ENCODE measurements at regions of chrX and their contacts with region 1.

Region 1: DNA sequence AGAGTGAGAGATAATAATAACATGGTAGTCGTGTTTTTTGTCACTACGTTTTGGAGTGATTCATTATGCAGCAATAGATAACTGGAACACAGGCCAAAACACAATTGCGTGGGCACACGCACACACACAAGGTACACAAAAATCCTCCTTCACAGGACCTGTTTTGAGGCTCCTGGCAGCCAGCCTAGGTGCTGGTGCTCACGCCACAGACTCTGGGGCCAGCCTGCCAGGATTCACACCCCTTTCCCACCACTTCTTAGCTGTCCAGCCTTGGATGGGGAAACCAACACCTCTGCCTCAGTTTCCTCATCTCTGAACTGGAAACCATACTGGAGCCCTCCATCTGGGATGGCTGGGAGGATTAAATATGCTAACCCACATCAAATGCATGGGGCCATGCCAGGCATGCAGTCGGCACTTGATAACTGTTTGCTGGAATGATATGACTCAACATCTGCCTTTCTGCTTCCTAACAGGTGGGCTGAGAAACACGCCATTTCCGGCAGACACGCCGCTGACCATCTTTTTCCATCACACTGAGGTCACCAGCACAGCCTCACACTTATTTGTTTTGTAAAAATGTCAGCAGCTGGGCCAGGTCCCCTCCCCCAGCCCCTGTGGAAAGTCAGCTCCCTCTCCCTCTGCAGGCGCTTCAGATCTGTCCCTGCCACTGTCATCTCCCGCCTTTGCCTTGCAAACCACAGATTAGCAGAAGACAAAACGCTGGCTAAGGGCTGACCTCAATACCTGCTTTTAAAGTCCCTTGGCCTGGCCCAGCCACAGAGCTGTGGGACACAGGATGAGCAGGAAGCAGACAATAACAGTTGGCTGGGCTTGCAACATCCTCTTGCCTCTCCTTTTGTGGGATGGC is 237.5 kb downstream of the BCOR start:
- DNase-seq: peak; percentile 92
- ATAC-seq: peak; percentile 65
- H3K4me3 Mint-ChIP-seq: peak overlapping the region; percentile 39
- H3K27ac Mint-ChIP-seq: peak overlapping the region; percentile 93
- H3K4me1 Mint-ChIP-seq: peaks cover 54% of the 10 kb centered on the region
- H3K27me3 Mint-ChIP-seq: no peaks in the 10 kb centered on the region

Region 2: GRCh38 chrX:39261446-39262147 is 598.6 kb before region 1 on chrX:
- CTCF ChIA-PET with region 1: no interaction called
- POLR2A ChIA-PET with region 1: no interaction called
- intact Hi-C with region 1: loop called in 1 of 2 experiments (anchors 10 kb)
- DNase-seq: peak; percentile 25
- ATAC-seq: peak; percentile 78
- H3K4me3 Mint-ChIP-seq: no peak overlapping the region
- H3K27ac Mint-ChIP-seq: peak overlapping the region; percentile 32
- H3K4me1 Mint-ChIP-seq: peaks cover 52% of the 10 kb centered on the region
- H3K27me3 Mint-ChIP-seq: no peaks in the 10 kb centered on the region

Region 3: GRCh38 chrX:39730662-39731397 is 129.4 kb before region 1 on chrX:
- CTCF ChIA-PET with region 1: interaction called, 5 read pairs
- POLR2A ChIA-PET with region 1: no interaction called
- intact Hi-C with region 1: loop called in 1 of 2 experiments (anchors 5 kb)
- DNase-seq: peak; percentile 76
- ATAC-seq: peak; percentile 92
- H3K4me3 Mint-ChIP-seq: peak overlapping the region; percentile 5
- H3K27ac Mint-ChIP-seq: peak overlapping the region; percentile 71
- H3K4me1 Mint-ChIP-seq: peaks cover 17% of the 10 kb centered on the region
- H3K27me3 Mint-ChIP-seq: no peaks in the 10 kb centered on the region

Region 4: DNA sequence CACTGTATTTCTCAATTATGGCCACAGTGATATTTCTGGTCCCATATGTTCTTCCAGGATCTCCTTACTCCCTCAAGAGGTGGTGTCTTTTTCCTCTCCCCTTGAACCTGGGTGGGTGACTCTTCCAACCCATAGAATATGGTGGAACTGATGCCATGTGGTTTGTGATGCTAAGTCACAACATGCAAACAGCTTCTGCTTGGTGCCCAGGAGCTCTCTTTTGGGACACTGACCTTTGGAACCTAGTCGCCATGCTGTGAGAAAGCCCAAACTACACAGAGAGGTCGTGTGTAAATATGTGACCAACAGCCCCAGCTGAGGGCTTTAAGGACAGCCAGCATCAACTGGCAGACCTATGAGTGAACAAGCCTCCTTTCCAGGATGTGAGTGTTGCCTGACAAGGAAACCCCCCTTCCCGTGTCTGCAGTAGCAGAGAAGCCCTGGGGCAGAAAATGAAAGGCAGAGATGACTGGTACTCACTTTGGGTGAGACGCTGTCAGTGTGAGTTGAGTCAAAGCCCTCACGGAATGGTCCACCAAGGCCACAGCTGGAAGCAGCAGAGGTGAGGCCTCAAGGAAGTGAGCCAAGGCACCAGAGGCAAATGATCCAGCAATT is 14.1 kb after region 1 on chrX:
- CTCF ChIA-PET with region 1: interaction called, 4 read pairs
- POLR2A ChIA-PET with region 1: interaction called, 8 read pairs
- intact Hi-C with region 1: loop called (anchors 1 kb)
- DNase-seq: peak; percentile 84
- ATAC-seq: peak; percentile 80
- H3K4me3 Mint-ChIP-seq: no peak overlapping the region
- H3K27ac Mint-ChIP-seq: peak overlapping the region; percentile 95
- H3K4me1 Mint-ChIP-seq: peaks cover 53% of the 10 kb centered on the region
- H3K27me3 Mint-ChIP-seq: no peaks in the 10 kb centered on the region

Region 5: DNA sequence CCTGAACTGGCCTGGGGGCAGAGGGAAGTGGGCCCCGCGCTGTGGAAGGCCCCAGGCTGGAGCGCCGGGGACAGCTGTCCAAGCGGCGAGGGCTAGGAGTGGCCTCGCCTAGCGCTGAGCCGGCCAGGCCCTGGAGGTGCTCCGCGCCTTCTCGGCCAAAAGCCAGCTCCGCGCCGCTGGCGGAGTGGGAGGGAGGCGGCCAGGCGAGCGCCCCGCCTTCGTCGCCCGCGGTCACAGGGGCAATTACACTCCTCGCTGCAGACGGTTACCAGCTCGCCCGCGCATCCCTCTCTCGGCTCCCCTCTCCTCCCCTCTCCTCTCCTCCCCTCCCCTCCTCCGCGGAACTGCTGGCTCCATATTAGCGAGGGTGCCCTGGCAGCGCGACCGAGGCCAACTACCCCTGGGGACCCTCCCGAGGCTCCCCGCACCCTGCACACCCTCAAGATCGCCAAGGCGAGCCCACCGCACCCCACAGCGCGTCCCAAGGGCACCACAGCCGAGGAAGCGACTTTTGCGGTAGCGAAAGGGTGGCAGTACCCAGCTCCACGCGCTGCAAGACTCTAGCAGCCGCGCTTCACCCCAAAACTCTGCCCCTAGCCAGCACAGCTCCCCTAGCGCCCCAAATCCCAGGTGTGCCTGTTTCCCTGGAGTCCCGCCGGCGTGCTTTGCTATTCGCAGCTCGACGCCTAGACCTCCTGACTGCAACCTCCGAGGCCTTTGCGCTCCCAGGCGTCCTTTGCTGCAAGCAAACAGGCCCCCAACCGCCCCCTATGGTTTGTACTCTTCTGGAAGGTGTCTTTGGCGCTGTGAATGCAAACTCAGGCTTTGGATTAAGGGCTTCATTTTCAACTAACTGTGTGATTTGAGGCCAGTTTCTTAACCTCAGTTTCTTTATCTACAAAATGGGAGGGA is 146.1 kb after region 1 on chrX:
- CTCF ChIA-PET with region 1: no interaction called
- POLR2A ChIA-PET with region 1: no interaction called
- intact Hi-C with region 1: loop called (anchors 5 kb)
- DNase-seq: peak; percentile 65
- ATAC-seq: peak; percentile 60
- H3K4me3 Mint-ChIP-seq: no peak overlapping the region
- H3K27ac Mint-ChIP-seq: no peak overlapping the region
- H3K4me1 Mint-ChIP-seq: peaks cover 25% of the 10 kb centered on the region
- H3K27me3 Mint-ChIP-seq: peaks cover 32% of the 10 kb centered on the region

Region 6: GRCh38 chrX:40031911-40032310 is 171.7 kb after region 1 on chrX:
- CTCF ChIA-PET with region 1: no interaction called
- POLR2A ChIA-PET with region 1: no interaction called
- intact Hi-C with region 1: no loop called
- DNase-seq: no peak
- ATAC-seq: no peak
- H3K4me3 Mint-ChIP-seq: no peak overlapping the region
- H3K27ac Mint-ChIP-seq: no peak overlapping the region
- H3K4me1 Mint-ChIP-seq: no peaks in the 10 kb centered on the region
- H3K27me3 Mint-ChIP-seq: no peaks in the 10 kb centered on the region

Region 7: DNA sequence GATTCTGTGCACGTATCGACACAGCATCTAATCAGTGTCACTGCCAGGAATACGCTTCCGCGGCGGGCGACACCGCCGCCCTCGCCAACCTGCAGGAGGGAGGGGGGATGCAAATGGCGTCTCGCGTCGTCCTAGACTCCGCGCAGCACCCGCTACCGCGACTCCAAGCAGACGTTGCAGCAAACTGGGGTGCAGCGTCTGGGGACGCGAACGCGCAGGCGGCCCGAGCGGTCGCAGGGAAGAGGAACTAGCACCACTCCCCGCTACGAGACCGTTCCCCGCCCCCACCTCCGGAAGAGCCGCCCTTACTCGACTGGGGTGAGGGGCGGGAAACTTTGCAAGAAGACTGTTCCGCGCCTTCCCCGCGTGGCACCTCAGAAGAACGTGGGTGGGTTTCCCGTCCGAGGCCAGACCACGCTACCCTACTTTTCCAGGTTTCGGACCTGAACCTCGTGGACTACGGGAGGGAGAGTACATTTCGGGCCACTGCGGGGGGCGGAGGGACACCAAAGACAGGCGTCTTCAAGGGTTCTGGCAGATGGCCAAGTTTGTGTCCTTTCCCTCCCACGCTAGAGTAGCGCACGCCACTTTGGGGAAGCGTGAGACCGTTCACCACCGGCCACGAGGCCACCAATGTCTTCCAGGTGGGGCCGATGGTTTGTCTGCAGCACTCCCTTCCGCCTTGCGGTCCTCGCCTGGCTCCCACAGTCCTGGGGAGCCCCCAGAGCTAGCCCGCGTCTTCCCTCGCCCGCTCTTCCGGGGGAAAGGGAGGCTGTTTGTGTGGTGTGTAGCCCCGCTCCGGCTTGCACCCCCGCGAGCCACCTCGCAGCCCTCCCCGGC is 315.5 kb after region 1 on chrX:
- CTCF ChIA-PET with region 1: no interaction called
- POLR2A ChIA-PET with region 1: interaction called, 3 read pairs
- intact Hi-C with region 1: loop called (anchors 1 to 2 kb)
- DNase-seq: peak; percentile 84
- ATAC-seq: peak; percentile 37
- H3K4me3 Mint-ChIP-seq: peak overlapping the region; percentile 80
- H3K27ac Mint-ChIP-seq: peak overlapping the region; percentile 99
- H3K4me1 Mint-ChIP-seq: peaks cover 25% of the 10 kb centered on the region
- H3K27me3 Mint-ChIP-seq: no peaks in the 10 kb centered on the region

Measured in activated CD4-positive, alpha-beta T cell treated with anti-CD3 and anti-CD28 coated beads for 36 hours (primary cell).